Activated CD8-positive, alpha-beta memory T cell treated with anti-CD3 and anti-CD28 coated beads, Interleukin-2, amount 10 ng/mL, durations not matched to agents 7 days and 5 days (primary cell): ENCODE measurements at regions of chr1 and their contacts with region 1.

Region 1: GRCh38 chr1:25608488-25609178 is 8.0 kb upstream of the MAN1C1 start:
- DNase-seq: peak; percentile 93
- ATAC-seq: peak; percentile 98
- H3K4me3 Mint-ChIP-seq: no peak overlapping the region
- H3K27ac Mint-ChIP-seq: no peak overlapping the region
- H3K4me1 Mint-ChIP-seq: peaks cover 8% of the 10 kb centered on the region
- H3K27me3 Mint-ChIP-seq: peaks cover 74% of the 10 kb centered on the region

Region 2: DNA sequence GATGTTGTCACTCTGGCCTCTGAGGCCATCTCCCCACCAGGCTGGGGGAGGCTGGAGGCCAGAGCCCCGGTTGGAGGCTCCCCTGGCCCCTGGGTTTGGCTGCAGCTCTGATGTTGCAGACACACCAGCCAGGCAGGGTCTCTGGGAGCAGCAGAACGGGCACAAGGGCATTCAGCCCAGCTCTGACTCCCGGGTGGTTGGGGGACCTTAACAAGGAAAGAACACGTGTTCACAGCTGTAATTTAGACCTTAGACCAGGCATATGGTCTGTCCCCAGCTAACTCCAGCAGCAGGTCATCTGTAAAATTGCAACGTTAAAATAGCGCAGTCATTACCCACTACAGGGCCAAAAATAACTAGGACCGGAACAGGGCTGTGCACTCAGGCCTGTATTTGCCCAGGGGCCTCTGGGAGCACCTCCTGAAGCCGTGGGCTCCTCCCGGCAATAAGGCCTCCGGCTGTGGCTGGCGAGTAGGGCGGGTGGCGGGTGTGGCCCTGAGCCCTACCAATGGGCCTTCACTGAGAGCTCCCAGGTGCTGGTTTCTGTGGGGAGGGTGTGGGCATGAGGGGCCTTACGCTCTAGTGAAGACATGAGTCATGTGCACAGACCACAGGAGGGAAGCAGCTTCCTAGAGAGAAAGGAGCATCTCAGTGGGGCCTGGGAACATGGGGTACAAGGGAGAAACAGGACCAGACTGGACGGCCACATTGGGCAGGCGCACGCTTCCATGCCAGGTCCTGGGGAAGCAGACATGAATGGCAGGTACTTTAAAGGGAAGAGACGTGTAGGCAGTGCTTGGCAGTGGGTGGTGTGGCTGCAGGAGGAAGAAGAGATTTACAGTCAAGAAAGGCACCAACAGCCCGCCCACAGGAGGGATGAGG is 59.1 kb before region 1 on chr1:
- CTCF ChIA-PET with region 1: interaction called, 10 read pairs
- DNase-seq: peak; percentile 93
- ATAC-seq: peak; percentile 93
- H3K4me3 Mint-ChIP-seq: peak overlapping the region; percentile 5
- H3K27ac Mint-ChIP-seq: peak overlapping the region; percentile 71
- H3K4me1 Mint-ChIP-seq: peaks cover 59% of the 10 kb centered on the region
- H3K27me3 Mint-ChIP-seq: peaks cover 17% of the 10 kb centered on the region

Region 3: DNA sequence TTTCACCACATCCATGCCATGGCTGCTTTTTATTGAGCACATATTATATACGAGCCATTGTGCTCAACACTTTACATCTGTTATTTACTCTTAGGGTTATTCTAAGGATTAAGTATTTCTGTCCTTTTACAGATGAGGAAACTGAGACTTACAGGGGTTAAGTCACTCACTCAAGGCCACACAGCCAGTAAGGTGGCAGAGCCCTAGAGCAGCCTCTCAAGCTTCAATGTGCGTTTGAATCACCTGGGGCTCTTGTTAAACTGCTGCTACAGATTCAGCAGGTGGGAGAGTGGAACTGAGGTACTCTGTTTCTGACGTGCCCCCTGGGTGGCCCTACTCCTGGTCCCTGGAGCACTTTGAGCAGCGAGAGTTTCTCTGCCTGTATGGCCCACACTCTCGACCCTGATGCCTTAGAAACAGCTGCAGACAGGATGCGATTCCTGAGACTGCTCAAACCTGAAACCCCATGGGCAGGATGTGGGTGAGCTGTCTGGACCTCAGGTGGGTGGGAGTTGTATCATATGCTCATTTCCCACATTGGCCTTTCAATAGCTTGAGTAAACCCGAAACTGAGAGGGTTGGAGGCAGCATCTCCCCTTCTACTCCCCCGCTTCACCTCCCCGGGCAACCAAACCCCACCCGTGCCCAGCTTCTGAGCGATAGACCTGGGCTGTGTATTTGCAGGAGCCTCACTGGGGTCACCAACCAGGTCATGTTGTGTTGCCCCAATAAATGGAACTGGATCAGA is 67.3 kb after region 1 on chr1:
- CTCF ChIA-PET with region 1: interaction called, 10 read pairs
- DNase-seq: peak; percentile 97
- ATAC-seq: peak; percentile 90
- H3K4me3 Mint-ChIP-seq: peak overlapping the region; percentile 52
- H3K27ac Mint-ChIP-seq: peak overlapping the region; percentile 64
- H3K4me1 Mint-ChIP-seq: peaks cover 50% of the 10 kb centered on the region
- H3K27me3 Mint-ChIP-seq: peaks cover 82% of the 10 kb centered on the region

Region 4: DNA sequence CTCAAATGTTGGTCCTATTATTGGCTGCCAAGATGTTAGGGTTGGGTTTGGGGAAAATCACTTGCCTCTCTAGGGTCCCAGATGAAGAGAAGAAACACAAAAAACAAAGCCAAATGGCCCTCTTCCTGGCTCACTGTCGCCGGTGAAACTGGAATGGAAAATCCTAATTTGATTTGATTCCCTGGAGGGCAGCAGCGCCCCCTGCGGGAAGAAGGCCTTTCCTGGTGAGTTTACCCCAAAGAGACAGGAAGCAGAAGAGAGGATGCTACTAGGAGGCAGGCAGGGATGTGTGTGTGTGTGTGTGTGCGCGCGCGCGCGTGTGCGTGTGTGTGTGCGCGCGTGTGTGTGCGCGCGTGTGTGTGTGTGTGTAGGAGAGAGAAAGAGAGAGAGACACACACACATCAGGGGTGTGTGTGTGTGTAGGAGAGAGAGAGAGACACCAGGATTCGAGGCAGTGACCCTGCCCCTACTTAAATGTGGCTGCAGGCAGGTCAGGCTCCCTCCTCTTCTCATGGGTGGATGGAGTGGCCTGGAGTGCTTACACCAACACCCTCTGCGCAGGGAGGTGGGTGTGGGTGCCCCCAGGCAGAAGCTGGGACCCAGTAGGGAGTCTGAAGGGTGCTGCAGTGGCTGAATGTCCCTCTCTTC is 188.3 kb after region 1 on chr1:
- CTCF ChIA-PET with region 1: interaction called, 75 read pairs
- DNase-seq: peak; percentile 87
- ATAC-seq: peak; percentile 73
- H3K4me3 Mint-ChIP-seq: peak overlapping the region; percentile 8
- H3K27ac Mint-ChIP-seq: peak overlapping the region; percentile 20
- H3K4me1 Mint-ChIP-seq: peaks cover 26% of the 10 kb centered on the region
- H3K27me3 Mint-ChIP-seq: peaks cover 41% of the 10 kb centered on the region

Region 5: DNA sequence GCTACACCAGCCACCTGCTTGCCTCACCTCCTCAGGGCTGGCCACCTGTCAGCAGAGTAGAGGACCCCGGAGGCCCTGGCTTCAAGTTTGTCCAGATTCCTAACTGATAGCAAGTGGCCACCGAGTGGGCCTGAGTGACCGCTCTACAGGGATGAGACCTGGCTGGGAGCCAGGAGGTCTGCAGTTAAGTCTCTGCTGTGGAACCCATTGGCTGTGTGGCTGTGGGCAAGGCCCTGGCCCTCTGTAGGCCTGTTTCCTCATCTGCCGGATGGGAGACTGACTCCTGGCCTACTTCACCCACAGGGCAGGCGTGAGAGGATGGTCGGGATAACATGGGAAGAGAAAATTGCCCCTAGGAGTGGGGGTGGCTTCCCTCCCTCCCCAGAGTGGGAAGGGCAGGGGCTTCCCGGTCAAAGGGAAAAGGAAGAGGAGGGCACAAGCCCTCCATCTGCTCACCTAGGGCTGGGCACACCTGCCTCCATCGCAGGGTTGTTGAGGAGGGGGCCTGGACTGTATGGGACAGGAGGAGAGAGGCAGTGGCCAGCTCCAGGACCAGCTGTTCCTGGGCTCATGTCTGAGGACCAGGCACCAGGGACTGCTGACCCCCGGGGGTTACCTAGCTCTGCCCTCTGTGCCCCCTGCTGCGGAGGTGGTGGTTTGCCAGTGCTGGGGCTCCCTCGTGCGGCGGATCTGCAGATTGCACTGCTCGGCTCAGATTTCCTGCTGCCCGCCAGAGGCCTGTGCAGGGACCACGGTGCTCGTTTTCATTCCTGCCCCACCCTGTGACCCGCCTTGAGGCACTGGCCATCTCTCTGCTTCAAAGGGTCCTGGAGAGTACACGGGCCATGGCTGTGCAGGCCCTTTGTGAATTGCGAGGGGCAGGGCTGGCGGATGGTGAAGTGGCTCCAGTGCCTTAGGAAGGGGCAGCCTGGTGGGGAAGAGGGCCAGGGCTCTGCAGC is 202.0 kb after region 1 on chr1:
- CTCF ChIA-PET with region 1: interaction called, 27 read pairs
- DNase-seq: peak; percentile 85
- ATAC-seq: peak; percentile 89
- H3K4me3 Mint-ChIP-seq: no peak overlapping the region
- H3K27ac Mint-ChIP-seq: no peak overlapping the region
- H3K4me1 Mint-ChIP-seq: peaks cover 3% of the 10 kb centered on the region
- H3K27me3 Mint-ChIP-seq: no peaks in the 10 kb centered on the region